ENCODE measurements at regions of chr2 and their contacts with region 1.

Region 1: DNA sequence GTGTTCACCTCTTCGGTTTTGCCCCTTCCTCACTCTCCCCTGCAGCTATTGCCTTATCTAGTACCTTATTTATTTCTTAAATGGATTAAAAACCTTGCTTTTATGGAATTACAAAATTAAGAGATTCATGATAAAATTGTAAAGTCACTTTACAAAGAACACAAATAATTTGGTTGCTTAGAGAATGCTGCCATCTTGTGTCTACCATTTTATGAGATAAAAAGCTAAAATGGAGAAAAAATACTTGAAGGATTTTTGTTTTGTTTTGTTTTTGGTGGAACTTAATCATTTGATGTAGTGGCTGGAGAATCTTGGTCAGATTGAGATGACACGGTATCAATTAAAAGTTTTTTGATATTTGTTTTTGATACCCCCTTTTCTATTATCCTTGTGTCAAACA is 69.6 kb downstream of the R3HDM1 start:
- DNase-seq: no peak
- H3K4me3 ChIP-seq: no peak overlapping the region
- H3K27ac ChIP-seq: no peak overlapping the region
- H3K27me3 ChIP-seq: no peaks in the 10 kb centered on the region
- CTCF ChIP-seq: 0 out of 2 replicates have a peak, but pooled peaks have one; percentile 27

Region 2: DNA sequence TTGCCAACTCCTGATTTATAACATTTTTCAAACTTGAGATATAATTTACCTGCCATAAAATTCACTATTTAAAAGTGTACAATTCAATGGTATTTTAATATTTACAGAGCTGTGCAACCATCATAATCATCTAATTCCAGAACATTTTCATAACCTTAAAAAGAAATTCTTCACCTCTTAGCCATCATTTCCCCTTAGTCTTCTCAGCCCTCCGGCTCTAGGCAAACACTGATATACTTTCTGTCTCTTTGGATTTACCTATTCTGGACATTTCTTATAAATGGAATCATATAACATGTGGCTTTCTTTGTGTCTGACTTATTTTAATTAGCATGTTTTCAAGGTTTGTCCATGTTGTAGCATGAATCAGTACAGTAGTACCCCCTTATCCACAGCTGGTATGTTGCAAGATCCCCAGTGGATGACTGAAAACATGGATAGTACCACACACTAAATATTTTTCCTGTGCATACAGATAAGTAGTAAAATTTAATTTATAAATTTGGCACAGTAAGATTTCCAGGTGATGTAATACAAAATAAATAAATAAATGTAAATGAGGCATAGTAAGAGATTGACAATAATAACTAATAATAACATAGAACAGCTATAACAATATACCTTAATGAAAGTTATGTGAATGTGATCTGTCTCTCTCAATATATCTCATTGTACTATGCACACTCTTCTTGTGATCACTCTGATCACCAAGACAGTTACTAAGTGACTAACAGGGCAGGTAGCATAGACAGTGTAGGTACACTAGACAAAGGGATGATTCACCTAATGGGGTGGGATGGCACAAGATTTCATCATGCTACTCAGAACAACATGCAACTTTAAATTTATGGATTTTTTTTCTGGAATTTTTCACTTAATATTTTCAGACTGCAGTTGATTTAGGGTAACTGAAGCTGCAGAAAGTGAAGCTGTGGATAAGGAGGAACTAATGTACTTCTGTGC is 475.7 kb before region 1 on chr2:
- CTCF ChIA-PET with region 1: no interaction called
- POLR2A ChIA-PET with region 1: no interaction called
- DNase-seq: no peak
- H3K4me3 ChIP-seq: no peak overlapping the region
- H3K27ac ChIP-seq: no peak overlapping the region
- H3K27me3 ChIP-seq: no peaks in the 10 kb centered on the region
- CTCF ChIP-seq: no peak

Region 3: DNA sequence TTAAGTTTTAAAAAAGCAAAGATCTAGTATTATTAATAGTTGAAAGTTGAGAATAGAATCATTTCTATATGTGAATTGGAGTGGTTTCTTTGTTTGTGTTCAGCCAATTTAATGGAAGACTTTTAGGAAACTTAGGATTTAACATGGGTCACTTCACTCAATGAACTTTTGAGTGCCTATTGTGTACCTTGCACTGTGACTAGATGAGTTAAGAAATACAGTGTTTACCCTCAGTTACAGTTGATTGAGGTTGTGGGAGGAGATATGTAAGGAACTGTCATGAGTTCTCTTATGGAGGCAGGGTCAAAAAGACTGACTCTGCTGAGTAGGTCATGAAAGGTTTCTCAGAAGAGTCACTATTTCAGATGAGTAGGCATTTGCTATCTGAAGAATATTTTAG is 450.2 kb before region 1 on chr2:
- CTCF ChIA-PET with region 1: no interaction called
- POLR2A ChIA-PET with region 1: no interaction called
- DNase-seq: no peak
- H3K4me3 ChIP-seq: no peak overlapping the region
- H3K27ac ChIP-seq: no peak overlapping the region
- H3K27me3 ChIP-seq: no peaks in the 10 kb centered on the region
- CTCF ChIP-seq: no peak

Region 4: DNA sequence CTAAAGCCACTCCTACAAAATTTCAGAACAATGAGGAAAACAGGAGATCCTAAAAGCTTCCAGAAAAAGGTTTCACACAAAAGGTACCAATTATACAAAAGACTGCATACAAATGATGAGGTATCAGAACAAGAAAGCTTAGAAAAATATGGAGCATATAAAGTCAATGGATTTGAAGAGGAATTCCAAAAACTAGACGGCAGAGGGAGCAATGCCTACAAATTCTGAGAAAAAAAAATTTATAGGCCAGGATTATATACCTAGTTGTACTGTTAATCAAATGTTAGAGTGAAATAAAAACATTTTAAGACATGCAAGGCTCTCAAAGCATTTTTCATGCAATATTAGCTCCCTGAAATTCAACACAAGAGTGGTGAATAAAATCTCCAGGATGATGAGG is 176.1 kb before region 1 on chr2:
- CTCF ChIA-PET with region 1: interaction called, 11 read pairs
- POLR2A ChIA-PET with region 1: no interaction called
- DNase-seq: no peak
- H3K4me3 ChIP-seq: no peak overlapping the region
- H3K27ac ChIP-seq: no peak overlapping the region
- H3K27me3 ChIP-seq: no peaks in the 10 kb centered on the region
- CTCF ChIP-seq: peak; percentile 22; the same call in 1 of the 2 replicates

Region 5: DNA sequence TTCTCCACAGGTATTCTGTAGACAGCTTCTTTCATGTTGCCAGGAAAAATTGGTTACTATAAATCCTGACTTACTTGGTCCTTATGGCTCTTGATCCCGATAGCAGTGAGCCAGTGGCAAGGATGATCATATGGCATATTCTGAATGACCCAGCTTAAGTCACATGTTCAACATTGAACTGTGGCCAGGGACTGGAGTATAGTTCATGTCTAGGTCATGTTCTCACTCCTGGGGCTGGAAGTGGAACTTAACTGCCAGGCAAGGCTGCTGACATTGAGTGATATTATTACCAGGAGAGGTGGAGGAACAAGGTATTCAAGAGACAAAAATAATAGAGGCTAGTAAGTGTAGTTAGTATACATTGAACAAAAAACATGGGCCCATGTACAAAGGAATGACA is 43.4 kb before region 1 on chr2:
- CTCF ChIA-PET with region 1: no interaction called
- POLR2A ChIA-PET with region 1: no interaction called
- DNase-seq: no peak
- H3K4me3 ChIP-seq: no peak overlapping the region
- H3K27ac ChIP-seq: no peak overlapping the region
- H3K27me3 ChIP-seq: no peaks in the 10 kb centered on the region
- CTCF ChIP-seq: no peak

Region 6: DNA sequence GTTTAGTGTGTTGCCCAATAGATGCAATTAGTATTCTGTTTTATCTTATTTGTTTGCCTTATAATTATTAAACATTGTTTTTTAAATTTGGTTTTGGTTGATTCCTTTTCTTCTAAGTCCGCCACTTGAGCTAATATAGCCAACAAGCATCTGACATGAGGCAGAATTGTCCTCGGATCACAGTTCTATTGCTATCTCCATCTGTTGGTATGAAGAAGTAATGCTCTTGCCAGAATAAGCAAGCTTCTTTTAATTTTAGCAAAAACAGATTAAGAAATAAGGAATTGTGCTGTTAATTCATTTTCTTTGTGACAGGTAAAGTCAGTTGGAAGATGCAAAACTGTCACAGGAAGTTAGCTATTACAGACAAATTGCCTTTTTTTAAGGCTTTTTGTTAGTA is 15.3 kb before region 1 on chr2:
- CTCF ChIA-PET with region 1: interaction called, 10 read pairs
- POLR2A ChIA-PET with region 1: no interaction called
- DNase-seq: no peak
- H3K4me3 ChIP-seq: no peak overlapping the region
- H3K27ac ChIP-seq: no peak overlapping the region
- H3K27me3 ChIP-seq: no peaks in the 10 kb centered on the region
- CTCF ChIP-seq: peak; percentile 39

Measured in AG04450 (cell line).